ENCODE measurements at regions of chr15 and their contacts with region 1.

Region 1: GRCh38 chr15:77543159-77543882 is 89.4 kb downstream of the LINGO1 start:
- DNase-seq: peak; percentile 80 to 94 (median 88)
- ATAC-seq: peak; percentile 89
- H3K4me3 ChIP-seq: peak overlapping the region; percentile 19 to 22
- H3K27ac ChIP-seq: no peak overlapping the region
- H3K4me1 ChIP-seq: peaks cover 17% of the 10 kb centered on the region in 2 donors
- H3K27me3 ChIP-seq: no peaks in the 10 kb centered on the region
- CTCF ChIP-seq: peak; percentile 89 to 98

Region 2: DNA sequence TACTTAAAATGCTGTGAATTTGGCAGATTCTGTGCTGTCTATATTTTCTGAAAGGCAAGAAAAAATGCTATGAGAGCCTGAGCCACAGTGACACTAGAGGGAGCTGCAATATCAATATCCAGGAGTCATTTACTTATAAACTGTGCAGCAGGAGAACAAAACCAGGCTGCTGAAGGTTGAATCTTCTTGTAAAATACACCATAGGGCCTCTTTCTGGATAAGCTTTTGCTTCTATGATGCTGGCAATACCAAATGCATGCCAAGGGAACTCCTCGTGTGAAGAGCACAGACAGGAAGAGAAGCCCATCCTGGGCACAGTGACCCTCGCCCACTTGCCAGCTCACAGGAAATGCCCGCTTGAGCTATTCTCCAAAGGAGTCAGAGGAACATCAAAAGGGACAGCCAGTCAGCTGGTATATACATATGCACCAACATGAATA is 424.4 kb before region 1 on chr15:
- intact Hi-C with region 1: loop called in 1 of 2 experiments (anchors 10 kb)
- DNase-seq: peak in 2 of 4 donors; percentile 64 to 79
- ATAC-seq: peak; percentile 89
- H3K4me3 ChIP-seq: no peak overlapping the region
- H3K27ac ChIP-seq: no peak overlapping the region
- H3K4me1 ChIP-seq: peaks cover 5 to 8% of the 10 kb centered on the region in 2 donors
- H3K27me3 ChIP-seq: no peaks in the 10 kb centered on the region
- CTCF ChIP-seq: peak; percentile 43 to 52

Region 3: DNA sequence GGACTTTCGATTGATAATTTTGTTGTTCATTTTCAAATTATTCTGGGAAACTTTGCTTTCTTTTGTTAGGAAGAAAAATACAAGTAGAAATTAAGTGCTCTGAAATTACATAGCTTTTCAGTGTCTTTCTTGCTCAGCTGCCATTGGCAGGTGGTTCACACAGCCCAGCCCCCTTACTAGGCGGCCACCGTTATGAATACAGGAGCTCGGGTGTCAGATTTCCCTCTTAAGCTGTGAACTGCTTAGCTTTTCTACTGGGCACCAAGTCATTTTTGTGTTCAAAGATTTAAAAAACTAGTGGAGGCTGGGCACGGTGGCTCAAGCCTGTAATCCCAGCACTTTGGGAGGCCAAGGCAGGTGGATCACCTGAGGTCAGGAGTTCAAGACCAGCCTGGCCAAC is 67.4 kb before region 1 on chr15:
- intact Hi-C with region 1: no loop called
- DNase-seq: no peak
- ATAC-seq: peak; percentile 58
- H3K4me3 ChIP-seq: no peak overlapping the region
- H3K27ac ChIP-seq: peak overlapping the region in 1 of 2 donors; percentile 57
- H3K4me1 ChIP-seq: peaks cover 9 to 10% of the 10 kb centered on the region in 2 donors
- H3K27me3 ChIP-seq: no peaks in the 10 kb centered on the region
- CTCF ChIP-seq: no peak

Measured in left lung (tissue), 14 donors.